Activated CD4-positive, alpha-beta T cell treated with anti-CD3 and anti-CD28 coated beads, Interleukin-2, amount 10 ng/mL, durations not matched to agents 24 days and 14 days (primary cell): ENCODE measurements at regions of chr10 and their contacts with region 1.

Region 1: DNA sequence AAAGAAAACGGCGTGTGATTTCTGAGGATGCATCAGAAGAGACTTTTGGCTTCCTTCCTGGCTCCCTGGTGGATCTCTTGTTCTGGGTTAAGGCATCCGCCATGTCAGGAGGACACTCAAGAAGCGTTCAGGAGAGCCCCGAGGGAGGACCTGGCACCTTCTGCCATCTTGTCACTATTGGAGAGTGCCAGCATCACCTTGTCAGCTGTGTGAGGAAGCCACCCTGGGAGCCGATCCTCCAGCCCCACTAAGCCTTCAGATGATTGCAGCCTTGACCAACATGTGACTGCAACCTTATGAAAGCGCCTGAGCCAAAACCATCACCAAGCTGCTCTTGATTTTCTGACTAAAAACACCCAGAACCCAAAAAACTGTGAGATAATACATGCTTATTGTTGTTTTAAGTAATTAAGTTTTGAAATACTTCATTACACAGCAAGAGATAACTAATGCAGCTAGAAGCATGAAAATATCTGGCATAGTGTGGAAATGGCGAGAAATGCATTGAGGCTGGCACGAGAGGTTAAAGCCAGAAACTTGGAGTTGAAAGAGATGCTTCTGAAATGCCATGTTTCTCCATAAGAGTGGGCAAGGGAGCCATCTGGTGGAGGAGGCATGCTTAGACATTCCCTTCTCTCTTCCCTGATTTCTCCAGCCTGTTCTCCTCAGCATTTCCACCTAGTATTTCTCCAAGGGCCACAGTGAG is 5.4 kb upstream of the ZFYVE27 start:
- DNase-seq: peak; percentile 86
- H3K4me3 Mint-ChIP-seq: no peak overlapping the region
- H3K27ac Mint-ChIP-seq: no peak overlapping the region
- H3K4me1 Mint-ChIP-seq: peaks cover 10% of the 10 kb centered on the region
- H3K27me3 Mint-ChIP-seq: peaks cover 5% of the 10 kb centered on the region

Region 2: GRCh38 chr10:97676770-97677581 is 54.5 kb before region 1 on chr10:
- intact Hi-C with region 1: loop called (anchors 1 kb)
- DNase-seq: peak; percentile 79
- H3K4me3 Mint-ChIP-seq: no peak overlapping the region
- H3K27ac Mint-ChIP-seq: no peak overlapping the region
- H3K4me1 Mint-ChIP-seq: peaks cover 8% of the 10 kb centered on the region
- H3K27me3 Mint-ChIP-seq: no peaks in the 10 kb centered on the region

Region 3: GRCh38 chr10:97701438-97702069 is 29.9 kb before region 1 on chr10:
- intact Hi-C with region 1: loop called (anchors 1 kb)
- DNase-seq: peak; percentile 89
- H3K4me3 Mint-ChIP-seq: no peak overlapping the region
- H3K27ac Mint-ChIP-seq: no peak overlapping the region
- H3K4me1 Mint-ChIP-seq: no peaks in the 10 kb centered on the region
- H3K27me3 Mint-ChIP-seq: peaks cover 7% of the 10 kb centered on the region

Region 4: DNA sequence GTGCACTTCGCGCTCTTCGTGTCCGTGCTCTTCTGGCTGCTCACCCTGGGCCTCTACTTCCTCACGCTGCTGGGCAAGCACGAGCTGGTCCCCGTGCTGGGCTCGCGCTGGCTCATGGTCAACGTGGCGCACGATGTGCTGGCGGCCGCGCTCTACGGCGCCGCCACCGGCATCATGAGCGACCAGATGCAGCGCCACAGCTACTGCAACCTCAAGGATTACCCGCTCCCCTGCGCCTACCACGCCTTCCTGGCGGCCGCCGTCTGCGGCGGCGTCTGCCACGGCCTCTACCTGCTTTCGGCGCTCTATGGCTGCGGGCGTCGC is 17.5 kb before region 1 on chr10:
- intact Hi-C with region 1: loop called (anchors 1 kb)
- DNase-seq: peak; percentile 87
- H3K4me3 Mint-ChIP-seq: peak overlapping the region; percentile 97
- H3K27ac Mint-ChIP-seq: peak overlapping the region; percentile 97
- H3K4me1 Mint-ChIP-seq: peaks cover 10% of the 10 kb centered on the region
- H3K27me3 Mint-ChIP-seq: peaks cover 26% of the 10 kb centered on the region